Esophagus squamous epithelium (tissue), 5 donors: ENCODE measurements at regions of chr10 and their contacts with region 1.

Region 1: GRCh38 chr10:29857843-29858701 is 201.3 kb downstream of the JCAD start:
- DNase-seq: no peak
- H3K4me3 ChIP-seq: no peak overlapping the region
- H3K27ac ChIP-seq: peak overlapping the region; percentile 51 to 61 (median 58)
- H3K4me1 ChIP-seq: peaks cover 20 to 74% (median 41%) of the 10 kb centered on the region in 3 donors
- H3K27me3 ChIP-seq: no peaks in the 10 kb centered on the region
- CTCF ChIP-seq: peak in 5 of 6 experiments; percentile 53 to 84 (median 70)
- POLR2A ChIP-seq: no peak

Region 2: GRCh38 chr10:29946953-29947700 is 89.1 kb after region 1 on chr10:
- intact Hi-C with region 1: loop called (anchors 10 kb)
- DNase-seq: no peak
- H3K4me3 ChIP-seq: peak overlapping the region in 1 of 4 donors; percentile 14
- H3K27ac ChIP-seq: peak overlapping the region; percentile 75 to 87 (median 85)
- H3K4me1 ChIP-seq: peaks cover 23 to 63% (median 57%) of the 10 kb centered on the region in 3 donors
- H3K27me3 ChIP-seq: no peaks in the 10 kb centered on the region
- CTCF ChIP-seq: no peak
- POLR2A ChIP-seq: peak in 2 of 4 donors; percentile 12 to 24

Region 3: DNA sequence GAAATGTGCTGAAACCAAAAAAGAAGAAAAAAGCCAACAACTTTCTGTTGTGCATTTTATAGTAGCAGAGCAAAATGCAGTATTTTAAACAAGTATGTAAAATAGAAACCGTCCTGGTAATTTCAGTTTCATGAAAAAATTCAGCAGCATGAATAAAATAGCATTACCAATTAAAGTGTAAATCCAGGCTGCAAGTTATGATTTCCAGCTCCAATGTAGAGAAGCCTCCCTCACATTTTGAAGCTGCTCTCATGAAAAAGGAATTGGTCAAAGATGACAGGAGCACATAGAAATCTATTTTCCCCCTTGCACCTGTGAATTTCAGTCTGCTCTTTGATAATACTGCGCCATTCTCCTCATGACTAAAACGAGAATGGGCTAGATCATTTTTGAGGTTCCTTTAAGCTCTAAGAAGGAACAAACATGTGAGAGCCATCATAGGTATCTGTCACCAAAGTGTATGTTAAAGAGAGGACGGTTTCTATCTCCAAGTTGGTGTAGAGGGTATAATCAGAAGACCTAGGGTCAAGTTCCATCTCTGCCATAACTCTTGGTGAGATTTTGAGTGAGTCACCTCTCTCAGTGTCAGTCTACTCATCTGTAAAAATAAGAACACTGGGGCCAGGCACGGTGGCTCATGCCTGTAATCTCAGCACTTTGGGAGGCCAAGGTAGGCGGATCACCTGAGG is 383.5 kb after region 1 on chr10:
- intact Hi-C with region 1: no loop called
- DNase-seq: no peak
- H3K4me3 ChIP-seq: no peak overlapping the region
- H3K27ac ChIP-seq: no peak overlapping the region
- H3K4me1 ChIP-seq: no peaks in the 10 kb centered on the region
- H3K27me3 ChIP-seq: no peaks in the 10 kb centered on the region
- CTCF ChIP-seq: no peak
- POLR2A ChIP-seq: no peak